ENCODE measurements at regions of chrX and their contacts with region 1.

Region 1: DNA sequence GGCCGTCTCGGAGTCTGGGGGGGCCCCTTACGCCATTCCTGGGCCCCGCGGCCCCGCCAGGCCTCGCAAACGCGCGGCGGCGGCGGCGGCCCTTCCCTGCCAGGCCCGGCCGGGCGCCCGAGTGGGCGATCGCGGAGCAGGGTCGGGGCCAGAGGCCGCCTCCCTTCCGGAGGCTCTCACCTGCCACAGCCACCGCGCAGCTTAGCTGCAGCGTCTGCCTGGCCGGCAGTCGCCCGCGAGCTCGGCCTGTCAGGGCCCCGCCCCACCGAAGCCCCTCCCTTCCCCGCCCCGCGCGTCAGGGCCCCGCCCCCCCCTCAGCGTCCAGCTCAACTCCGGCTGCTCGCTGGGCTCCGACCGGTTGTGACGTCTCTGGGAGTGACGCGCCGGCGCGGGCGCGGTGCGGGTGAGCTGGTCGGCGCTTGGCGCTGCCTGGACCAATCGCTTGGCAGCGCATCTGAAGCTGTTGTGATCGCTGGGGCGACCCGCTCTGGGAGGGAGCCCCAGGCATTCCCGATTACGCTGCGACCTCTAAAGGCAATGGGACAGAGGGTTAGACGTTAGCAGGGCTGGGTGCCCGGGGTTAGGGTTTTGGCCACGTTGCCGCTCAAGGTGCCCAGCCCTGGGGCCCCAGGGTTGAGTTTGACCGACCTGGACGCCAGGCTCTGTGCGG is at the start of gene SLC10A3:
- DNase-seq: peak; percentile 87 to 97
- H3K4me3 ChIP-seq: peak within 1 kb of the TSS; percentile 66
- H3K27ac ChIP-seq: peak within 1 kb of the TSS; percentile 68
- H3K4me1 ChIP-seq: peaks cover 14% of the 10 kb centered on the region; the same call in 1 of the 2 replicates
- H3K27me3 ChIP-seq: no peaks in the 10 kb centered on the region
- CTCF ChIP-seq: no peak
- total RNA-seq, gene SLC10A3: 38.3 and 54.9 TPM in 2 replicates

Region 2: DNA sequence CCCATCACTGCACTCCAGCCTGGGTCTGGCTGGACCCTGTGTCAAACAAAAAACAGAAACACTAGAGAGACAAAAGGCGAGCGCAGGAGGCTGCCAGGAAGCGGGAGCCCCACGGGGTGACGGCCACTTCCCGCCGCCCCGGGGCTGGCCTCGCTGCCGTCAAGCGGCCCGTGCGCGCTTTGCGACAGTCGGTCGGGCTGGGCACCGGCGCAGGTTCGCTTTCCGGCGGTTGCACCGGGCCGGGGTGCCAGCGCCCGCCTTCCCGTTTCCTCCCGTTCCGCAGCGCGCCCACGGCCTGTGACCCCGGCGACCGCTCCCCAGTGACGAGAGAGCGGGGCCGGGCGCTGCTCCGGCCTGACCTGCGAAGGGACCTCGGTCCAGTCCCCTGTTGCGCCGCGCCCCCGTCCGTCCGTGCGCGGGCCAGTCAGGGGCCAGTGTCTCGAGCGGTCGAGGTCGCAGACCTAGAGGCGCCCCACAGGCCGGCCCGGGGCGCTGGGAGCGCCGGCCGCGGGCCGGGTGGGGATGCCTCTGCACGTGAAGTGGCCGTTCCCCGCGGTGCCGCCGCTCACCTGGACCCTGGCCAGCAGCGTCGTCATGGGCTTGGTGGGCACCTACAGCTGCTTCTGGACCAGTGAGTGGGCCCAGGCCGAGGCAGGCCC is 79.1 kb before region 1 on chrX and contains the start of gene TAFAZZIN:
- CTCF ChIA-PET with region 1: no interaction called
- POLR2A ChIA-PET with region 1: no interaction called
- intact Hi-C with region 1: loop called (anchors 2 kb)
- DNase-seq: peak; percentile 41 to 80
- H3K4me3 ChIP-seq: peak within 1 kb of the TSS; percentile 77
- H3K27ac ChIP-seq: peak within 1 kb of the TSS; percentile 32
- H3K4me1 ChIP-seq: peaks cover 19% of the 10 kb centered on the region
- H3K27me3 ChIP-seq: no peaks in the 10 kb centered on the region
- CTCF ChIP-seq: no peak
- total RNA-seq, gene TAFAZZIN: 95.8 and 134 TPM in 2 replicates

Region 3: DNA sequence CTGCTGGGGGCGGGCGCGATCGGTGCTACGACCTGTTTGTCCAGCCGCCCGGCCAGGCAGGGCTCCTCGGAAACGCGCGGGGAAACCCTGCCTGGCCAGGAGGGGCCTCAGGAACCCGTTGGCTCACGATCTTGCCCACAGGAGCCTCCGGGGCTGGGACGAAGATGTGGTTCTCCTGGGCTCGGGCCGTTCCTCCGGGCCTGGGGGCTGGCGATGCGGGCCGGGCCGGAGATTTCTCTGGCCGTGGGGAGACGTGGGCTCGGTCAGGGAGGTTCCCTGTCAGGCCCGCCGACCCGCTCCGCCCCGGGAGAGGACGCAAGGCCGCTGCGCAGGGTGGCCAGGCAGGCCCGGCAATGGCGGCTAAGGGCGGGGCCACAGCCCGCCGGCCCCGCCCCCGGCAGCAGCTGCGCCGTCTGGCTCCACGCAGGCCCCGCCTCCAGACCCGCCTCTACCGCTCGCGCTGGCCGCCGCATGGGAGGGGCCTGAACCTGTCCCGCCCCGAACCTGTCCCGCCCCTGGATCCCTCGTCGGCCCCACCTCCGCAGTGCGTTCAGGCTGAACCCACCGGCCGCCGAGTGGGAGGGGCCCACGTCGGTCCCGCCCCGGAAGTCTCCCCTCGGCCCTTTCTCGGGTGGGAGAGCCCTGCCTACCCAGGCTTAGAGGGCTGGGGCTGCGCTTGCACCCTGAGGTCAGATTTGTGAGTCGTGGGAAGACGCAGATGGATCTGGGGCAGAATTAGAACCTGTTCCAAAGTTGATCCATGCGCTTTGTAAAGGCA is 25.5 kb after region 1 on chrX and contains the start of gene FAM3A:
- CTCF ChIA-PET with region 1: no interaction called
- POLR2A ChIA-PET with region 1: interaction called, 11 read pairs
- intact Hi-C with region 1: loop called (anchors 1 kb)
- DNase-seq: peak; percentile 61 to 97
- H3K4me3 ChIP-seq: peak within 1 kb of the TSS; percentile 72
- H3K27ac ChIP-seq: peak within 1 kb of the TSS; percentile 46
- H3K4me1 ChIP-seq: no peaks in the 10 kb centered on the region
- H3K27me3 ChIP-seq: no peaks in the 10 kb centered on the region
- CTCF ChIP-seq: no peak
- total RNA-seq, gene FAM3A: 60.3 and 69.3 TPM in 2 replicates

Region 4: GRCh38 chrX:154541724-154542467 is 51.3 kb after region 1 on chrX:
- CTCF ChIA-PET with region 1: no interaction called
- POLR2A ChIA-PET with region 1: interaction called, 14 read pairs
- intact Hi-C with region 1: loop called (anchors 1 kb)
- DNase-seq: peak; percentile 93 to 97
- H3K4me3 ChIP-seq: peak overlapping the region; percentile 99
- H3K27ac ChIP-seq: peak overlapping the region; percentile 100
- H3K4me1 ChIP-seq: peaks cover 58% of the 10 kb centered on the region
- H3K27me3 ChIP-seq: no peaks in the 10 kb centered on the region
- CTCF ChIP-seq: no peak